ENCODE measurements at regions of chr19 and their contacts with region 1.

Region 1: DNA sequence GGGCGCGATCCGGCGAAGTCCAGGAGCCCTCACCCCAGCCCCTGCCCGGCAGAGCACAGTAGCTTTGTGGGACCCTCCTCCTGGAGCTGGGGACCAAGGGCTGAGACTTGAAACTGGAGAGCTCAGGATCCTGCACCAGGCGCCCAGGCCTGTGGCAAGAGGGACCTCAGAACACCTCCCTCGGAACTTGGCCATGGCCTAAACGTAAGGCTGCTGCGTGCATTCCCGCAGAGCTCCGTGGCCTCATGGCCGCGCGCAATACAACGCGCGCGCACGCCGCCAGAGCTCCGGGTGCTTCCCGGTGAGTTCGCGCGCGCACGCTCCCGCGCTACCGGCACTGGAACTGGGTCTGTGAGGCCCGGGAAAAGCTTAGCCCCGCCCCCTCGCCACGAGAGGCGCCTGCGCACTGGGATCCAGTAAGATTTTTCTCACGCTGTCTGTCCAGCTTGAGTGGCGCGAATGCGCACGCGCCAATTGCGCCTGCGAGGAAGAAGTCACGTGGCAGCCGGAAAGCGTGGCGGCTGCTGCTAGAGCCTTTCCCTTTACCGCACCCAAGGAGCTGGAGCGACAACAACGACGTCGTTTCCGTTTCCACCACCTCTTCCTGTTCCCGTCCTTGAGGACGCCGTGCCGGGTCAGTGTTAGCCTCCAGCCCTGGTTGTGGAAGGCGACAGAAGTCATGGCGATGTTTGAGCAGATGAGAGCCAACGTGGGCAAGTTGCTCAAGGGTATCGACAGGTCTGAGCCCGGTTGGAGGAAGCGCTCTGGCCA is at the start of gene EIF3K:
- H3K4me3 ChIP-seq: peak within 1 kb of the TSS; percentile 65
- H3K27ac ChIP-seq: peak within 1 kb of the TSS; percentile 94
- H3K4me1 ChIP-seq: peaks cover 16% of the 10 kb centered on the region
- CTCF ChIP-seq: no peak

Region 2: GRCh38 chr19:38374429-38375176 is 244.2 kb before region 1 on chr19 and contains the start of gene PSMD8:
- CTCF ChIA-PET with region 1: no interaction called
- POLR2A ChIA-PET with region 1: interaction called, 16 read pairs
- H3K4me3 ChIP-seq: peak within 1 kb of the TSS; percentile 70
- H3K27ac ChIP-seq: peak within 1 kb of the TSS; percentile 93
- H3K4me1 ChIP-seq: peaks cover 20% of the 10 kb centered on the region
- CTCF ChIP-seq: peak; percentile 97

Region 3: GRCh38 chr19:38544034-38544958 is 74.5 kb before region 1 on chr19:
- CTCF ChIA-PET with region 1: interaction called, 17 read pairs
- POLR2A ChIA-PET with region 1: interaction called, 35 read pairs
- H3K4me3 ChIP-seq: peak overlapping the region; percentile 37
- H3K27ac ChIP-seq: peak overlapping the region; percentile 19
- H3K4me1 ChIP-seq: peaks cover 11% of the 10 kb centered on the region
- CTCF ChIP-seq: peak; percentile 90

Region 4: GRCh38 chr19:38596057-38596981 is 22.5 kb before region 1 on chr19:
- CTCF ChIA-PET with region 1: interaction called, 3 read pairs
- POLR2A ChIA-PET with region 1: interaction called, 84 read pairs
- H3K4me3 ChIP-seq: peak overlapping the region; percentile 42
- H3K27ac ChIP-seq: peak overlapping the region; percentile 49; the same call in 1 of the 2 replicates
- H3K4me1 ChIP-seq: peaks cover 12% of the 10 kb centered on the region
- CTCF ChIP-seq: peak; percentile 50; the same call in 1 of the 2 replicates

Region 5: GRCh38 chr19:38640368-38640767 is 21.6 kb after region 1 on chr19:
- CTCF ChIA-PET with region 1: interaction called, 61 read pairs
- POLR2A ChIA-PET with region 1: interaction called, 14 read pairs
- H3K4me3 ChIP-seq: no peak overlapping the region
- H3K27ac ChIP-seq: no peak overlapping the region
- H3K4me1 ChIP-seq: 0 out of 2 replicates have a peak, but pooled peaks cover 2% of the 10 kb centered on the region
- CTCF ChIP-seq: no peak

Region 6: DNA sequence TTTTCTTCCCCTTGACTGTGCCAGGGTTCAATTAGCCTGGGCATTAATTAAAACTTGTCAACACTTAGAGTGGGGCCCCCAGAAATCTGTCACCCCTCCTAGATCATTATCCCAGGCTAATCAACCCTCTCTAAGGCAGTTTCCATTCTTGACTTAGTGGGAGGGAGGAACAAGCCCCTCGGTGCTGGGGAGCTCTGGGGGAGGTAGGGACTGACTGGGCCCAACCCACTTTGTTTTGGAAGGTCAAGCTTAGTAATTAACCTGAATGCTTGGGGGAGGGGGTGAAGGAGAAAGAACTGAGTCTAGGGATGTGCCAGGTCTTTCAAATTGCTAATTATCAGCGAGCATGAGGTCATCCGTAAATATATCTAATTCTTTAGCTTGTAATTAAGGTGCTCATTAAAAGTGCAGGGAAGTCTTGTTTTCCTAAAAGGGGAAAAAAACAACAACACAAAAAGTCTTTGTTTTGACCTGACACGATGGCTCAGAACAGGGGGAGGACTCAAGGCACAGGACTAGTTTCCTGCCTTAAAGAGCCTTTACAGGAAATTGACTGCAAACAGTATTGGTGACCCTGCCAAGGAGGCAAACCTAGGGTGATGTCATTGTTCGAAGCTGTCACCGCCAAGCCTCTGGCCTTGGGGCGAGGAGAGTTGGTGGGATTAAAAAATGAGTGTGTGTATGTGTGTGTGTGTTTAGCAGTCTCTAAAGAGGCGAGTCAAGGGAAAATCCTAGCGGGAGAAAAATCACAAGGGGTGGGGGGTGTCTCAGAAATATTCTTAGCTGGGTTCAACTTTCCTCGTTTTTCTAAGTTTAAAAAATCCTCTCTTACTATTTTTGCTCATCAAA is 48.1 kb after region 1 on chr19:
- CTCF ChIA-PET with region 1: no interaction called
- POLR2A ChIA-PET with region 1: interaction called, 11 read pairs
- H3K4me3 ChIP-seq: no peak overlapping the region
- H3K27ac ChIP-seq: peak overlapping the region; percentile 68
- H3K4me1 ChIP-seq: peaks cover 80% of the 10 kb centered on the region
- CTCF ChIP-seq: no peak

Region 7: GRCh38 chr19:38769635-38770211 is 150.9 kb after region 1 on chr19:
- CTCF ChIA-PET with region 1: no interaction called
- POLR2A ChIA-PET with region 1: no interaction called
- H3K4me3 ChIP-seq: no peak overlapping the region
- H3K27ac ChIP-seq: peak overlapping the region; percentile 52; the same call in 1 of the 2 replicates
- H3K4me1 ChIP-seq: no peaks in the 10 kb centered on the region
- CTCF ChIP-seq: peak; percentile 46; the same call in 1 of the 2 replicates

Region 8: DNA sequence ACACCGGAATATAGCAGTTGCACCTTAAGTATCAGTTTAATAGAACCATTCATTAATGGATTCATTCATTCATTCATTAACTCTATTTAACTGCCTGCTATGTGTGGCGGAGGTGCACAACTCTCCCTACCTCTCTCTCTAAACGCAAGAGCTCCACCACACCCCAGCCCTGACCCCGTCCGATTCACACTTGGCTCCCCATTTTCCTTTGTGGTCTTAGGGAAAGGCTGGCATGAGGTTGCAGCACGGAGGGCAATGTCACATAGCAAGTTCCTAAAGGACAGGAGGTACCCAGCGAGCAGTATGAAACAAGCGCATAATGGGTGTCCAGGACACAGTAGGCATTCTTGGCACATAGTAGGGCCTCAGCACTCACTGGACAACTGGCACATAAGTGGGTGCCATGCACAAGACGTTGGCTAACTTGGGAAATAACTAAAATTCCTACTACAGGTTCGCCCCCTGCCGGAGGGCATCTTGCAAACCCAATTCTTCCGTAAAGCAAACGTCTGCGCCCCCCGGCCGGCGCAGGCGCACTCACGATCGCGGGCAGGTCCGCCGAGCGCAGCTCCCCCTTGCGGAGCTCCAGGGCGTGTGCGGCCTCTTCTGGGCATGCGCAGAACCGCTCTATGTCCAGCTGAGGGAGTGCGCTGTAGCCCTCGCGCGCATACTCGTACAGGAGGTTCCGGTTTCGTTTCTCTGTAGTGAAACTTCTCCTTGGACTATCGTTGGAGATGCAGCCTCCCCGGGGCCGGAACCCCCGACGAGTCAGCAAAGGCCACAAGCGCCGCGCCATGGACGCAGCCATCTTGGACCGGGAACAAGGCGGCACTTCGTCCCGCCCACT is 311.4 kb after region 1 on chr19 and contains the start of gene SARS2:
- CTCF ChIA-PET with region 1: interaction called, 4 read pairs
- POLR2A ChIA-PET with region 1: interaction called, 12 read pairs
- H3K4me3 ChIP-seq: peak within 1 kb of the TSS; percentile 70
- H3K27ac ChIP-seq: peak within 1 kb of the TSS; percentile 81
- H3K4me1 ChIP-seq: peaks cover 10% of the 10 kb centered on the region; the same call in 1 of the 2 replicates
- CTCF ChIP-seq: peak; percentile 100